ENCODE measurements at regions of chr13 and their contacts with region 1.

Region 1: DNA sequence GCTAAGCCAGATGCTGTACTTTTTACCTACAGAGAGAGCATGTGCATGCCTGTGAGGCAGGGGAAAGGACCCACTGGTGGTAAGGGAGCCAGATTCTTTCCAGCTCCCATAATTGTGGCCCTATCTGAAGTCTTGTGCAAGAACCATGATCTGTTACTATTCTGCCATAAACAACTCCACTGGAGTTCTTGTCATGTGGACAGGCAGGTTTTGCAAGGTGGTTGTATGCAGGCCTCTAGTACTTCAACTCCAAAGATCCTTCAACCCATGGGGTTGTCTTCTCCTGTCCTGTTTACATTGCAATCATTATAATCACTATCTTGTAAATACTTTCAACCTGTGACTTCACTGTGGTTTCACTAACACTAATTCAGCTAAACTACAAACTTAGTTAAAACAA is 14.1 kb downstream of the PROSER1 start:
- H3K4me3 Mint-ChIP-seq: no peak overlapping the region
- H3K27ac Mint-ChIP-seq: no peak overlapping the region
- H3K4me1 Mint-ChIP-seq: no peaks in the 10 kb centered on the region
- H3K27me3 Mint-ChIP-seq: no peaks in the 10 kb centered on the region

Region 2: DNA sequence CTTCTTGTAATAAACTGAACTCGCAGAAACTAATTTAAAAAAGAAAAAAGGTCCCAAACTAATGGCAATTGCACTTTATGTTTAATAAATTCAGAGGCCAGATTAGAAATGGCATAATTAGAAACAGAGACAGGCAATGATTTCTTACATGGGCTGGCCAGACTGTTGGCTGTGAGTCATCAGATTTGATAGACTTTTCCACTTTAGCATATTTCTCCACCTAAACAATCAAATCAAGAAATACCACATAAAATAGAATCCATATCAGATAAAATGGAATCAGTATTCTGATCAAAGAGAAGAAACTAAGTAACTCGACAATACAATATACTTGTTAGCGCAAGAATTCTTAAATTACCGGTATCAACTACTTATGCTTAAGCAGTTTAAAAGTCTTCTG is 1994.2 kb before region 1 on chr13:
- intact Hi-C with region 1: loop called (anchors 10 kb)
- H3K4me3 Mint-ChIP-seq: no peak overlapping the region
- H3K27ac Mint-ChIP-seq: no peak overlapping the region
- H3K4me1 Mint-ChIP-seq: no peaks in the 10 kb centered on the region
- H3K27me3 Mint-ChIP-seq: no peaks in the 10 kb centered on the region

Region 3: GRCh38 chr13:40233731-40234195 is 1210.0 kb after region 1 on chr13:
- intact Hi-C with region 1: no loop called
- H3K4me3 Mint-ChIP-seq: no peak overlapping the region
- H3K27ac Mint-ChIP-seq: no peak overlapping the region
- H3K4me1 Mint-ChIP-seq: no peaks in the 10 kb centered on the region
- H3K27me3 Mint-ChIP-seq: peaks cover 10% of the 10 kb centered on the region

Measured in dendritic cell treated with granulocyte-macrophage colony-stimulating factor and Interleukin-4, amounts not matched to agents 40 ng/mL and 50 ng/mL, for 4 days (primary cell).